ENCODE measurements at regions of chrX and their contacts with region 1.

Region 1: GRCh38 chrX:110450050-110450449 is 91.4 kb downstream of the RTL9 start:
- DNase-seq: peak in 7 of 9 donors; percentile 9 to 50 (median 44)
- ATAC-seq: peak; percentile 64
- H3K4me3 ChIP-seq: no peak overlapping the region
- H3K4me3 Mint-ChIP-seq: no peak overlapping the region
- H3K27ac ChIP-seq: no peak overlapping the region
- H3K27ac Mint-ChIP-seq: no peak overlapping the region
- H3K4me1 ChIP-seq: no peaks in the 10 kb centered on the region
- H3K4me1 Mint-ChIP-seq: no peaks in the 10 kb centered on the region
- H3K27me3 ChIP-seq: peaks cover 0 to 4% of the 10 kb centered on the region in 2 donors
- H3K27me3 Mint-ChIP-seq: peaks cover 4 to 7% (median 5%) of the 10 kb centered on the region in 5 donors

Region 2: DNA sequence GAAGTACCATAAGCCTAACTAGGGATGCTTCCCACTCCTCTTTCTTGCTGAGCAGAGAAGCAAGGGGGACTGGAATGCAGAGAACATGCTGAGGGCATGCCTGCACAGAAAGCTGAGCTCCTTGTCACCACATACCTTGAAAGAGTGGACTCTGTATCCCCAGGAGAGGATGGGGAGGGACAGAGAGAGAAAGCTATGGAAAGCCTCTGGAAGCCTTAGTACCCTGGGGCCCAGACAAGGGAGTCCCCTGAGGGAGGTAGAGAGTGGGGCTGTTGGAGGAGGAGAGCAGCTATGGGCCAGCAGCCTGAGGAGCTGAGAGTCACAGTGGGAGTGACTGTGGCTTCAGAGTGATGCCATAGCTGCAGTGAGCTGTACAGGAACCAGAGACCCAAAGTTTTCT is 13.5 kb before region 1 on chrX:
- CTCF ChIA-PET with region 1: no interaction called
- POLR2A ChIA-PET with region 1: no interaction called
- intact Hi-C with region 1: no loop called
- DNase-seq: no peak
- ATAC-seq: no peak
- H3K4me3 ChIP-seq: no peak overlapping the region
- H3K4me3 Mint-ChIP-seq: no peak overlapping the region
- H3K27ac ChIP-seq: no peak overlapping the region
- H3K27ac Mint-ChIP-seq: no peak overlapping the region
- H3K4me1 ChIP-seq: no peaks in the 10 kb centered on the region
- H3K4me1 Mint-ChIP-seq: no peaks in the 10 kb centered on the region
- H3K27me3 ChIP-seq: no peaks in the 10 kb centered on the region
- H3K27me3 Mint-ChIP-seq: peaks cover 2 to 15% (median 7%) of the 10 kb centered on the region in 5 donors

Region 3: DNA sequence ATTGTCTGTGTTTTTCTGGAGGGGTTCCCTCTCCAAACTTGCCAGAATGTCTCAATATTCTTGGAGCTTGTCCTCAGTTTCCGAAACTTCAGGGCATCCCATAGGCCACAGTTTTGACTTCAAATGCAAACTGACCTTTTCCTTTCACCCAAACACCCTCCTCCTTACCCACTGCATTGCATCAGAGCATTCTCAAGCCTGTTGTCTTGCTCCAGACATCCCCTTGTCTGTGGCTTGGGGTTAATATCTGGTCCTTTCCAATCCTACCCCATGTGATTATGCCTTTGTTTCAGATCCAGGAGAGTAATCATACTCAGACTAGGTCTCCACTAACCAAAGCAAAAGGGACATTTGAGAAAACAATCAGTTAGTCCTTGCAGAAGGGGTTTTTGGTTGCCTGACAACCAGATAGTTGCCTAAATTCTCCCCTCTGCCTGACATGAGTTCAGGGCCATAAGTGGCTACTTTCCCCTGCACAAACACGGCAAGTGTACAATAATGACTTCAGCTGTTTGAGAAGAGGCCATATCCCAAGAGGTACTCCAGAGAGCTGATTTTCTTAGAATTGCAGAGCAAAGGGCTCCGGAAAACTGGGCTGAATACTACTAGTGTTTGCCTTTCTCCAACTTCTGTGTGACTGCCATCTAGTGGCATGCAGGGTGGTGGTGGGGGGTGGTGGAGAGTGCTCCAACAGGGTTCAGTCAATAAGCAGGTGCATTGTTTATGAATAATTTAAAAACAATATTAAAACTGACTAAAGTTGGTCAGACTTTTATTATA is 215.4 kb after region 1 on chrX:
- CTCF ChIA-PET with region 1: no interaction called
- POLR2A ChIA-PET with region 1: no interaction called
- intact Hi-C with region 1: loop called in 1 of 2 experiments (anchors 5 kb)
- DNase-seq: peak in 2 of 9 donors; percentile 6 to 18
- ATAC-seq: no peak
- H3K4me3 ChIP-seq: no peak overlapping the region
- H3K4me3 Mint-ChIP-seq: no peak overlapping the region
- H3K27ac ChIP-seq: no peak overlapping the region
- H3K27ac Mint-ChIP-seq: no peak overlapping the region
- H3K4me1 ChIP-seq: no peaks in the 10 kb centered on the region
- H3K4me1 Mint-ChIP-seq: no peaks in the 10 kb centered on the region
- H3K27me3 ChIP-seq: no peaks in the 10 kb centered on the region
- H3K27me3 Mint-ChIP-seq: no peaks in the 10 kb centered on the region

Region 4: GRCh38 chrX:110847334-110847733 is 397.3 kb after region 1 on chrX:
- CTCF ChIA-PET with region 1: no interaction called
- POLR2A ChIA-PET with region 1: no interaction called
- intact Hi-C with region 1: loop called in 1 of 2 experiments (anchors 1 kb)
- DNase-seq: peak in 6 of 9 donors; percentile 15 to 53 (median 44)
- ATAC-seq: peak; percentile 61
- H3K4me3 ChIP-seq: no peak overlapping the region
- H3K4me3 Mint-ChIP-seq: no peak overlapping the region
- H3K27ac ChIP-seq: no peak overlapping the region
- H3K27ac Mint-ChIP-seq: peak overlapping the region in 1 of 9 donors; percentile 75
- H3K4me1 ChIP-seq: no peaks in the 10 kb centered on the region
- H3K4me1 Mint-ChIP-seq: peaks cover 0 to 2% (median 0%) of the 10 kb centered on the region in 7 donors
- H3K27me3 ChIP-seq: no peaks in the 10 kb centered on the region
- H3K27me3 Mint-ChIP-seq: peaks cover 0 to 5% (median 0%) of the 10 kb centered on the region in 5 donors

Region 5: DNA sequence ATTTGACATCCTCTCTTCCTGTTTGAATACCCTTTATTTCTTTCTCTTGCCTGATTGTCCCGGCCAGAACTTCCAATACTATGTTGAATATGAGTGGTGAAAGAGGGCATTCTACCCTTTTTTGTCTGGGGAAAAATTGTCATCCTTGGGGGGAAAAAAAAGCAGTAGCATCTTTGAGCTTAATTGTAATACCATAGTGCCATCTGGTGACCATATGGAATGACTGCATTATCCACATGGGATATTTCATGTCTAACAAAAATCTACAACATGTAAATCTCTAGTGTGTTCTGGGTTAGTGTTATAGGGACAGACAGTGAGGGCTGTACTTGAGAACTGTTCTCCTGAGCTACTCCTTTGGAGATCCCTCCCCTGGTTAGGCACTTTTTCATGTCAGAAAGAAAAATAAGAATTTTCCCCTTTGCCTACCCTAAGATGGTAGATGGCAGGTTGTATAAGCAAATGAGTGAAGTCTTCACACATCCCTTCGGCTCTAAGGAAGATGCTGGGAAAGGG is 794.2 kb after region 1 on chrX:
- CTCF ChIA-PET with region 1: no interaction called
- POLR2A ChIA-PET with region 1: no interaction called
- intact Hi-C with region 1: loop called in 1 of 2 experiments (anchors 5 kb)
- DNase-seq: no peak
- ATAC-seq: no peak
- H3K4me3 ChIP-seq: no peak overlapping the region
- H3K4me3 Mint-ChIP-seq: no peak overlapping the region
- H3K27ac ChIP-seq: no peak overlapping the region
- H3K27ac Mint-ChIP-seq: no peak overlapping the region
- H3K4me1 ChIP-seq: no peaks in the 10 kb centered on the region
- H3K4me1 Mint-ChIP-seq: no peaks in the 10 kb centered on the region
- H3K27me3 ChIP-seq: no peaks in the 10 kb centered on the region
- H3K27me3 Mint-ChIP-seq: peaks cover 0 to 2% (median 0%) of the 10 kb centered on the region in 5 donors

Region 6: DNA sequence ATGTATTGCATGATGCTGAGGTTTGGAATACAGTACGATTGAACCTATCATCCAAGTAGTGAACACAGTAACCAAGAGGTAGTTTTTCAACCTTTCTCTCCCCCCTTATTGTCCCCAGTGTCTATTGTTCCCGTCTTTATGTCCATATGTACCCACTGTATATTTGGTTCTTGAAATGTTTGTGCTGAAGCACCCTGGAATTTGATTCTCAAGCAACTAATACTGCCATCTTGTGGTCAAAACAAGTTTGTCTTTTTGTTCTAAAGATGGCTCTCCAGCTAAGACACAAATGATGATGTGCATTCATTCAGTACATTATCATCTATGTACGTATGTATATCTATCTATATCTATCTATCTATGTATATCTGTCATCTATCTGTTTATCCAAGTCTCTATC is 995.4 kb after region 1 on chrX:
- CTCF ChIA-PET with region 1: no interaction called
- POLR2A ChIA-PET with region 1: no interaction called
- intact Hi-C with region 1: loop called in 1 of 2 experiments (anchors 10 kb)
- DNase-seq: peak in 5 of 9 donors; percentile 0 to 25 (median 13)
- ATAC-seq: no peak
- H3K4me3 ChIP-seq: no peak overlapping the region
- H3K4me3 Mint-ChIP-seq: no peak overlapping the region
- H3K27ac ChIP-seq: no peak overlapping the region
- H3K27ac Mint-ChIP-seq: no peak overlapping the region
- H3K4me1 ChIP-seq: no peaks in the 10 kb centered on the region
- H3K4me1 Mint-ChIP-seq: peaks cover 0 to 1% (median 0%) of the 10 kb centered on the region in 7 donors
- H3K27me3 ChIP-seq: no peaks in the 10 kb centered on the region
- H3K27me3 Mint-ChIP-seq: peaks cover 0 to 12% (median 0%) of the 10 kb centered on the region in 5 donors

Measured in naive thymus-derived CD4-positive, alpha-beta T cell (primary cell).